Posterior vena cava (tissue), 2 donors: ENCODE measurements at regions of chr11 and their contacts with region 1.

Region 1: GRCh38 chr11:25981998-25982397 is 349.9 kb upstream of the ANO3 start:
- DNase-seq: no peak

Region 2: GRCh38 chr11:26014451-26015115 is 32.6 kb after region 1 on chr11:
- intact Hi-C with region 1: no loop called
- DNase-seq: no peak

Region 3: DNA sequence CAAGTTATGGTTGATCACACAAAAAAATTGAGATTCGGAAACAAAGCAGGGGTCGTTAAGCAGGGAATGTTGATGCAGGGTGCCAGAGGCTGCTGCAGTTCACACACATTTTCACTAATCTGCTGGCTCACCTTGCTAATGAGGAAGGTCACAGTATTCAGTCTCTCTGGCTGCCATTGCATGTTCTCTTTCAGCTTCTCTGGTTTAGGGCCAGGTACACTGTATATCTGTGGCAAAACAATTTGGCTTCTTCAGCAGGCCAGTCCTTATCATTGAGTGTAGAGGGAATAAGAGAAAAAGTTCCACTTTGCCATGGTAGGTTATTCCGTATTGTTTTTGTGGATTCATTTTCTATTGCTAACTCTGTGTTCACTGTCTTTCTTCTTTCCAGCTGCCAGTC is 66.3 kb after region 1 on chr11:
- intact Hi-C with region 1: no loop called
- DNase-seq: no peak

Region 4: DNA sequence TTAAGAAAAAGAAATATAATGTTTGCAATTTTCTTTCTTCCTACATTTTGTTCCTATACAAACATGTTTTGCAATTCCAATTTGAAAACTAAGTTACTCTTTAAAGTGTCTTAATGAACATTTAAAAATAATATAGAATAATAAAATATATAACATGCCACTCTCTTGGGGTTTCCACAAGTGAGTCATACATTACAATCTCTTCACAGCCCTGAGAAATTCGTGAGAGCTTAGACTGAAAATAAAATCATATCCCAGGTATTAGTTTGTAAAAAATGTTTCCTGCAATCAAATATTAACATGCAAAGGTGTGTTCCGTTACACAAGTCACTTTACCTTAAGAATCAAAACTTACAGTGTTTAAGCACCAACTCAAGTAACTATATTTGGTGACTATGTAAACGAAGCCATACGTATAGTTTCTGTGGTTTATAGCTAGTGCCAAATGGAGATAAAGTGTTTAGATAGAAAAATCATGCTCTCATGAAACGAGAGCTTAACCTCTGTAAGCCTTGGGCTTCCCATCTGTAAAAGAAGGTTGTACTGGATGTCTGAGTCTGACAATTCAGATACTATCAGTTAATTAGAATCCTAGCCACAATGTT is 96.3 kb after region 1 on chr11:
- intact Hi-C with region 1: no loop called
- DNase-seq: no peak

Region 5: DNA sequence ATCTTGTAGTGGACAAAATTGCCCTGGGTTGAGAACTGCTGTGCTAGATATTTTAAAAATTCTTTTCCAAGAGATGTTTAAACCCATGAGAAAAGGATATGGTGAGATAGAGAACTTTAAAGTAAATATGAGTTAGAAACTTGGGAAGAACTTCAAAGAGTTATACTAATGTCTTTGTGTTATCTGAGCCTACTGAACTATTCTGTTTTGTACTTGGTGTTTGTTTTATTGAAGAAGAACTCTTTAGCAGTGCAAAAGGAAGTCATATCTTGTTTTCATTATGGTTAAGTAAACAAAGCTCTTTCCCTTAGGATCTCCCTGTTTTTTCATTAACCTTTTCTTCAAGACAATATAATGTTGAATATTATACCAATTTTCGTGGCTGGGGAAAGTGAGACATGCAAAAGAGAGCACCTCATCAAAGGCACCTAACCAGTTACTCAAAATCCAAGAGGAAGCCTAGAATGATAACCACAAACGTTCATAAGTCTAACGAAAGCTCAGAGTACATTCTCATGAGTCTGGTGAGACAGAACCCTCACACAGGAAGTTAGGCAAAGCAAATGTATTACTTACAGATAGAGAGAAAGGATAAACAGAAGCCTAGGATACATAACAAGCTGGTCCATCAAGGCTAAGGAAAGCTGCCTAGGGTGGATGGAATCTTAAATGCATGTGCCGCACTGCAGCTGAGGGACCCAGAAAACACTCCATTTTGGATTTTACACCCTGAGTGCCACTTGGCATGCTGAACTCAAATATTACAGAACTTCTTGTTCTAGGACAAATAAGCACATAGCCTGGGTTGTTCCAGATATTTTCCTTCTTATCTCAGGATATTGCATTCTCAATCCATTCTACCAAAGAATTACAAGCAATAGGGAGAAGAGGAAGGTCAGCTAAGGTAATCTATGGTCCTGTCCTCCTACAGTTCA is 237.5 kb after region 1 on chr11:
- intact Hi-C with region 1: loop called in 1 of 2 experiments (anchors 5 kb)
- DNase-seq: no peak

Region 6: DNA sequence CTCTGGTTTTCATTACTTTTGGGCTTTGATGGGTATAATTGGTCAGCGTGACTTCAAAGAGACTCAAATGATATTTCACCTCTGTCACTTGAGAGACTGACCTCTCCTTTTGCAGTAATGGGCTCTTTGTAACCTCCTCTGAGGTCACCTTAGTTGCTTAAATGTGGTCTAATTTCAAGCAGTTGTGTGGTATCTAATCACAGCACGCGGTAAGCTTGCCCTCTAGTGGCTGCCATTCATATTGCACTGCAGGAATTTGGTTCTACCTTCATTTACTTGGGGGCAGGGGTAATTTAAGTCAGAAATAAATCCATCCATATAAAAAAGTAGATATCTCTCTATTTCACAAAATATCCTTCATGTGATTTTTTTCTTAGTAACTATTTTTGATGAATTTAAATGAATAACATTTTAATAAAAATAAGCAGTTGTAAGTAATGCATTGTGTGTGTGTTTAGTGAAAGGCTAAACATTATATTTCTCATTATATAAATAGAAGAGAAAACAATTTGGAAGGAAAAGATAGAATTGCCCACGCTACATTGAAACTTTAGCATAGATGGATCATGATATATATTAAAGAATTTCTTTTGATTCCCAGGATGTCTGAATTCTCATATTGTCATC is 294.9 kb after region 1 on chr11:
- intact Hi-C with region 1: loop called in 1 of 2 experiments (anchors 10 kb)
- DNase-seq: no peak